ENCODE measurements at regions of chr6 and their contacts with region 1.

Region 1: GRCh38 chr6:5174244-5174643 is 86.5 kb downstream of the LYRM4 start:
- DNase-seq: no peak
- ATAC-seq: no peak
- H3K4me3 Mint-ChIP-seq: no peak overlapping the region
- H3K27ac Mint-ChIP-seq: peak overlapping the region; percentile 70; the same call in 1 of the 2 replicates
- H3K4me1 Mint-ChIP-seq: peaks cover 29% of the 10 kb centered on the region
- H3K27me3 Mint-ChIP-seq: no peaks in the 10 kb centered on the region
- CTCF ChIP-seq: no peak

Region 2: GRCh38 chr6:4879724-4880371 is 294.4 kb before region 1 on chr6:
- CTCF ChIA-PET with region 1: no interaction called
- POLR2A ChIA-PET with region 1: no interaction called
- DNase-seq: no peak
- ATAC-seq: no peak
- H3K4me3 Mint-ChIP-seq: no peak overlapping the region
- H3K27ac Mint-ChIP-seq: peak overlapping the region; percentile 82
- H3K4me1 Mint-ChIP-seq: peaks cover 52% of the 10 kb centered on the region
- H3K27me3 Mint-ChIP-seq: no peaks in the 10 kb centered on the region
- CTCF ChIP-seq: no peak

Region 3: GRCh38 chr6:5053038-5053437 is 121.2 kb before region 1 on chr6:
- CTCF ChIA-PET with region 1: interaction called, 10 read pairs
- POLR2A ChIA-PET with region 1: no interaction called
- DNase-seq: no peak
- ATAC-seq: no peak
- H3K4me3 Mint-ChIP-seq: no peak overlapping the region
- H3K27ac Mint-ChIP-seq: no peak overlapping the region
- H3K4me1 Mint-ChIP-seq: peaks cover 9% of the 10 kb centered on the region
- H3K27me3 Mint-ChIP-seq: peaks cover 4% of the 10 kb centered on the region
- CTCF ChIP-seq: no peak

Region 4: DNA sequence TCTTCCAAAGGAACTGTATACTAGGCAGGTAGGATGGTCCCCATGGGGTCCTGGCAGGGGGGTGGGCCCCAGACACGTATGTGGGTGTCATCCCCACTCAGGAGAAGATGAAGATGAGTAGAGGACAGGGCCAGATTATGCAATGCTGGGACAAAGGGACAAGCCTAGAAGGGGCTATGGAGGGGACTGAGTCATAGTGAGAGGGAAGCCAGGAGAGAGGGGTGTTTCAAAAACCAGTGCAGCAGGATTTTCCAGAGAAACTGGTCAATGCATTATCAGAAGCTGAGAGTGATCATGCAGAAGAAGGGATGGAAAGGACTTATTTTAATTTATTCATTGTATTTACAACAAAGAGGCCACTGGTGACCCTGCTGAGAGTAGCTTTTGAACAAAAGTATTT is 15.1 kb before region 1 on chr6:
- CTCF ChIA-PET with region 1: interaction called, 12 read pairs
- POLR2A ChIA-PET with region 1: no interaction called
- DNase-seq: no peak
- ATAC-seq: no peak
- H3K4me3 Mint-ChIP-seq: no peak overlapping the region
- H3K27ac Mint-ChIP-seq: no peak overlapping the region
- H3K4me1 Mint-ChIP-seq: peaks cover 9% of the 10 kb centered on the region
- H3K27me3 Mint-ChIP-seq: no peaks in the 10 kb centered on the region; the same call in 1 of the 2 replicates
- CTCF ChIP-seq: no peak

Measured in WTC11 (cell line).